ENCODE measurements at regions of chr16 and their contacts with region 1.

Region 1: GRCh38 chr16:59510008-59510424 is 775.9 kb upstream of the GOT2 start:
- DNase-seq: no peak
- H3K4me3 ChIP-seq: no peak overlapping the region
- H3K27ac ChIP-seq: no peak overlapping the region
- H3K4me1 ChIP-seq: no peaks in the 10 kb centered on the region
- H3K27me3 ChIP-seq: peaks cover 7% of the 10 kb centered on the region
- CTCF ChIP-seq: no peak

Region 2: DNA sequence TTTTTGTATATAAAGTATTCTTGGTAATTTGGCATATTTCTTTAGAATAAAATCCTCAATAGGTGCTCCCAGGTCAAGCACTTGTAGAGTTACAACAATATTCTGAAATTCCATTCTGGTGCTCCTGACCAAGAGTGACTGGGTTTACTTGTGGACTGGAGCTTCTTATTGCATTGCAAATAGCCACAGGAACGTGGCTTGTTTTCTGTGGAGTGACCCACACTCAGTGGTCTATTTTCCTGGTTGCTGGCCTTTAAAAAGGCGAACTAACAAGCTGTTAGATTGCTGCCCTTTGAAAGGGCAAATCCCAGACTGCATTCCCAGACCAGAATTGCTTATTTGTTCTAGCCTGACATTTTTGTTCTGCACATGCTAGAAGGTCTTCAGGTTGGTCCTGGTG is 117.1 kb before region 1 on chr16:
- CTCF ChIA-PET with region 1: no interaction called
- POLR2A ChIA-PET with region 1: no interaction called
- intact Hi-C with region 1: loop called (anchors 5 kb)
- DNase-seq: no peak
- H3K4me3 ChIP-seq: no peak overlapping the region
- H3K27ac ChIP-seq: no peak overlapping the region
- H3K4me1 ChIP-seq: no peaks in the 10 kb centered on the region
- H3K27me3 ChIP-seq: no peaks in the 10 kb centered on the region
- CTCF ChIP-seq: no peak

Measured in PC-9 (cell line).